ENCODE measurements at regions of chr3 and their contacts with region 1.

Region 1: GRCh38 chr3:155805802-155806618 is at the start of gene C3orf33:
- DNase-seq: peak; percentile 83
- H3K4me3 Mint-ChIP-seq: peak within 1 kb of the TSS; percentile 84
- H3K27ac Mint-ChIP-seq: peak within 1 kb of the TSS; percentile 53
- H3K4me1 Mint-ChIP-seq: peaks cover 9% of the 10 kb centered on the region
- H3K27me3 Mint-ChIP-seq: peaks cover 7% of the 10 kb centered on the region
- total RNA-seq, gene C3orf33: 1.6 to 2.5 TPM

Region 2: DNA sequence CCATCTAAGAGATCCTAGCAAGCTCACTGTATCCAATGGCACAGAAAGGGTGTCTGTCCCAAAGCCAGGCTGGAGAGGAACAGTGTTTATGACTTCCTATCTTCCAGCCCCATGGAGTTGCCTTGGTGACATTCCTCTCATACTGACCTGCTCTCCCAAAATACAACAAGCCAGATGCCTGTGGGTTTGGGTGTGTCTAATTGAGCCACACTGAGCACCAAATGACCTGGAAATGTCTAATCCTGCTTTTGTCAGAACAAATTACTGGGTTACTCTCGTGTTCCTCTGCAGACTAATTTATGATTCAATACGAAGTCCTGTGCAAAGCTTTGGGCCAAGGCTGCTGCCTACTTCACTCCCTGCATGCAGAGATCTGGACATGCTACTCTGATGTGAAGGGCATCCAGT is 414.5 kb before region 1 on chr3:
- CTCF ChIA-PET with region 1: no interaction called
- POLR2A ChIA-PET with region 1: no interaction called
- intact Hi-C with region 1: no loop called
- DNase-seq: no peak
- H3K4me3 Mint-ChIP-seq: no peak overlapping the region
- H3K27ac Mint-ChIP-seq: no peak overlapping the region
- H3K4me1 Mint-ChIP-seq: no peaks in the 10 kb centered on the region
- H3K27me3 Mint-ChIP-seq: no peaks in the 10 kb centered on the region

Region 3: GRCh38 chr3:155744626-155745324 is 61.2 kb before region 1 on chr3 and contains the start of gene PLCH1:
- CTCF ChIA-PET with region 1: interaction called, 5 read pairs
- POLR2A ChIA-PET with region 1: no interaction called
- intact Hi-C with region 1: loop called (anchors 5 kb)
- DNase-seq: peak; percentile 66
- H3K4me3 Mint-ChIP-seq: peak within 1 kb of the TSS; percentile 79
- H3K27ac Mint-ChIP-seq: no peak within 1 kb of the TSS
- H3K4me1 Mint-ChIP-seq: peaks cover 15% of the 10 kb centered on the region
- H3K27me3 Mint-ChIP-seq: peaks cover 32% of the 10 kb centered on the region
- total RNA-seq, gene PLCH1: 0.10 to 0.12 TPM

Region 4: DNA sequence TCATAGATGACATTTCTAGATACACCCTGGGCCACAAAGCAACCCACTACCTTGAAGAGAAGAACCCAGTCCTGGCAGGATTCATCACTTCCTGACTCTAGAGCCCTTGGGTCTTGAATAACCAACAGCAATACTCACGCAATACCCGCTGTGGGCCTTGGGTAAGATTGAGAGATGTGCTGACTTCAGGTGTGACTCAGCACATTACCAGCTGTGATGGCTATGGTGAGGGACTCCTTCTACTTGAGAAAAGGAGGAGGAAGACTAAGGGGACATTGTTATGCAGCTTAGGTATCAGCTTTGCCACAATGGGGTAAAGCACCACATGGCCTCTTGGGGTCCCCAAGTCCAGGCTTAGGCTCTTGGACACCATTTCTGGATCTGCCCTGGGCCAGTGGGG is 14.8 kb before region 1 on chr3:
- CTCF ChIA-PET with region 1: interaction called, 14 read pairs
- POLR2A ChIA-PET with region 1: no interaction called
- intact Hi-C with region 1: no loop called
- DNase-seq: peak; percentile 18
- H3K4me3 Mint-ChIP-seq: no peak overlapping the region
- H3K27ac Mint-ChIP-seq: no peak overlapping the region
- H3K4me1 Mint-ChIP-seq: no peaks in the 10 kb centered on the region
- H3K27me3 Mint-ChIP-seq: no peaks in the 10 kb centered on the region

Region 5: DNA sequence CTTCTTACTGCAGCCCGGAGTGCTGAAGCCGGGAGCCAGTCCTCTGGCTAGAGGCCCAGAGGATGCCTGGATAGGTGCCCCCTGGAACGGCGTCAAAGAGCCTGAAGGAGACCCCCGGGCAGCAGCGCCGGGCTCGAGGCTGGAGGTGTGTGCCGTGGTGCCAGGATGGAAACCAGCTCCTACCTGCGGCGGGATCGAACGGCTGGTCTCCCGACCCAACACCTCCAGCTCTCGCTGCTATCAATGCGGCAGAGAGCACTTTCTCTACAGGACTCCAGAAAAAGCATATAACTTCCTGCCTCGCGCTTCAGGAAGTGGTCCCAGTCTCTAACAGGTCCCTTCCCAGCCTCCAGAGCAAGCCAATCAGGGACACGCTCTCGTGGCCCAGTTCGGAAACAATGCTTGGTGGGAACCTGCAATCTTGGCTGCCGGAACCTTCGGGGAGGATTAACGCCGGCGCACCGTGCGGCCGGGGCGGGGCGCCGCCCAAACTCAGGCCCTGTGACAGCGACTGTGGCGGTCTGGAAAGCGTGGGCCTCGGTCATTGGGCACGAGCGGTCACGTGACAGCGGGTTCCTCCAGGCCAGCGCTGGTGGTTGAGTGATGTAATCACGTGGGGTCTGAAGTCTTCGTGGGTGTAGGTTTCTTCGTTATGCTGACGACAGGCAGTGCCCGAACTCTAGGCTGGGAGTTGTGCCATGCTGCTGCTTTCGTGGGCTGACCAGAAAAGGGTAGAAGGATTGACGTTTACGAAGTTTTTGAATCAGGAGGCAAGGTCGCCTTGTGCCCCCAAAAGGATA is 48.3 kb after region 1 on chr3 and contains the start of gene SLC33A1:
- CTCF ChIA-PET with region 1: interaction called, 35 read pairs
- POLR2A ChIA-PET with region 1: interaction called, 13 read pairs
- intact Hi-C with region 1: loop called (anchors 1 kb)
- DNase-seq: peak; percentile 99
- H3K4me3 Mint-ChIP-seq: peak within 1 kb of the TSS; percentile 97
- H3K27ac Mint-ChIP-seq: peak within 1 kb of the TSS; percentile 99
- H3K4me1 Mint-ChIP-seq: peaks cover 31% of the 10 kb centered on the region
- H3K27me3 Mint-ChIP-seq: no peaks in the 10 kb centered on the region
- total RNA-seq, gene SLC33A1: 20.5 to 23.6 TPM

Region 6: GRCh38 chr3:155870133-155870944 is 64.3 kb after region 1 on chr3 and contains the start of gene GMPS:
- CTCF ChIA-PET with region 1: interaction called, 88 read pairs
- POLR2A ChIA-PET with region 1: interaction called, 22 read pairs
- intact Hi-C with region 1: loop called (anchors 1 kb)
- DNase-seq: peak; percentile 97
- H3K4me3 Mint-ChIP-seq: peak within 1 kb of the TSS; percentile 92
- H3K27ac Mint-ChIP-seq: peak within 1 kb of the TSS; percentile 88
- H3K4me1 Mint-ChIP-seq: peaks cover 25% of the 10 kb centered on the region
- H3K27me3 Mint-ChIP-seq: no peaks in the 10 kb centered on the region
- total RNA-seq, gene GMPS: 143 to 152 TPM